ENCODE measurements at regions of chr14 and their contacts with region 1.

Region 1: GRCh38 chr14:52351233-52352060 is 37.3 kb downstream of the PTGER2 start:
- DNase-seq: no peak
- H3K4me3 ChIP-seq: no peak overlapping the region
- H3K27ac ChIP-seq: peak overlapping the region; percentile 72 to 80 (median 78)
- H3K4me1 ChIP-seq: peaks cover 0 to 32% (median 25%) of the 10 kb centered on the region in 4 donors
- H3K27me3 ChIP-seq: peaks cover 0 to 34% (median 10%) of the 10 kb centered on the region in 3 donors
- CTCF ChIP-seq: no peak
- EP300 ChIP-seq: no peak
- POLR2A ChIP-seq: no peak

Region 2: GRCh38 chr14:51395361-51395849 is 956.0 kb before region 1 on chr14:
- intact Hi-C with region 1: loop called (anchors 10 kb)
- DNase-seq: peak; percentile 82
- H3K4me3 ChIP-seq: no peak overlapping the region
- H3K27ac ChIP-seq: peak overlapping the region; percentile 71 to 83 (median 80)
- H3K4me1 ChIP-seq: peaks cover 0 to 47% (median 41%) of the 10 kb centered on the region in 4 donors
- H3K27me3 ChIP-seq: no peaks in the 10 kb centered on the region
- CTCF ChIP-seq: no peak
- EP300 ChIP-seq: no peak
- POLR2A ChIP-seq: no peak

Region 3: GRCh38 chr14:52313903-52314594 is 37.4 kb before region 1 on chr14 and contains the start of gene PTGER2:
- intact Hi-C with region 1: loop called (anchors 5 kb)
- DNase-seq: peak; percentile 92
- H3K4me3 ChIP-seq: peak within 1 kb of the TSS; percentile 28 to 54 (median 48)
- H3K27ac ChIP-seq: peak within 1 kb of the TSS; percentile 12 to 79 (median 50)
- H3K4me1 ChIP-seq: peaks cover 0 to 25% (median 19%) of the 10 kb centered on the region in 4 donors
- H3K27me3 ChIP-seq: peaks cover 0 to 33% (median 15%) of the 10 kb centered on the region in 3 donors
- CTCF ChIP-seq: no peak
- EP300 ChIP-seq: no peak
- POLR2A ChIP-seq: no peak
- total RNA-seq, gene PTGER2: 0.55 to 2.5 (median 1.3) TPM

Measured in sigmoid colon (tissue), 7 donors.